ENCODE measurements at regions of chr19 and their contacts with region 1.

Region 1: DNA sequence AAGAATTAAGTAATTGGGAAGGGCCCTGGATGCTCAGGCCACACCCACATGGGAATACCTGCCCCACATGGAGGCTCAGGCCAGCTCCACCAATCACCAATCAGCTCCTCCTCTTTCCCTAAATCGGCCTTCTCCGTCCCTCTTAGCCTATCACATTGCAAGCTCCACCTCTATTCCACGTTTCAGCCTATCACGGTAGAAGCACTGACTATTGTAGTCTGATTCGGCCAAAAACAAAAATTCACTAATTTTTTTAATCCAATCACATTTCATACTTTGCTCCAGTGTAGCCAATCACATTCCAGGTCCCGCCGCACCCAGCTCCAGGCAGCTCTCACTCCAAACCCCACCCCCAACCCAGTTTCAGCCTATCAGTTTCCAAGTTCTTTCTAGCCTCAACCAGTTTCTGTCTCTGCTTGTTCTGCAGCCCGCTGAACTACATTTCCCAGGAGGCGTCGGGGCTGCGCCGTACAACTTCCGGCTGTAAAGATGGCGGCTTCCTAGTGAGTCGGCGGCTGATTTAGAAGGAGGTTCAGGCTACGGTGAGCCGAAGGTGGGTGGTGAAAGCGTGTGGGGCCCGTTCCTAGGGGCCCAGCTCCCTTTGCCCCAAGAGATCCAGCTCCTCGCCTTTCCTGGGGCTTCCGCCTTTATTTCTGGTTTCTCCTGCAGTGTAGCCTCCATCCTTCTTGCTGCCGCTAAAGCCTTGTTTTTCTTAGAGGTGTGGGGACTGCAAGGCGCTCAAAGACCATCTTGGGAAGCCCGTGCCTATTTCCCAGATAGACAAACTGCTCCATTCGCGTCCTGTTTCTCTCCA is at the start of gene BABAM1:
- DNase-seq: peak; percentile 81
- ATAC-seq: peak; percentile 89
- H3K4me3 Mint-ChIP-seq: peak within 1 kb of the TSS; percentile 91
- H3K27ac Mint-ChIP-seq: peak within 1 kb of the TSS; percentile 93
- H3K4me1 Mint-ChIP-seq: peaks cover 29% of the 10 kb centered on the region
- H3K27me3 Mint-ChIP-seq: no peaks in the 10 kb centered on the region
- CTCF ChIP-seq: no peak
- total RNA-seq, gene BABAM1: 121 and 135 TPM in 2 replicates

Region 2: DNA sequence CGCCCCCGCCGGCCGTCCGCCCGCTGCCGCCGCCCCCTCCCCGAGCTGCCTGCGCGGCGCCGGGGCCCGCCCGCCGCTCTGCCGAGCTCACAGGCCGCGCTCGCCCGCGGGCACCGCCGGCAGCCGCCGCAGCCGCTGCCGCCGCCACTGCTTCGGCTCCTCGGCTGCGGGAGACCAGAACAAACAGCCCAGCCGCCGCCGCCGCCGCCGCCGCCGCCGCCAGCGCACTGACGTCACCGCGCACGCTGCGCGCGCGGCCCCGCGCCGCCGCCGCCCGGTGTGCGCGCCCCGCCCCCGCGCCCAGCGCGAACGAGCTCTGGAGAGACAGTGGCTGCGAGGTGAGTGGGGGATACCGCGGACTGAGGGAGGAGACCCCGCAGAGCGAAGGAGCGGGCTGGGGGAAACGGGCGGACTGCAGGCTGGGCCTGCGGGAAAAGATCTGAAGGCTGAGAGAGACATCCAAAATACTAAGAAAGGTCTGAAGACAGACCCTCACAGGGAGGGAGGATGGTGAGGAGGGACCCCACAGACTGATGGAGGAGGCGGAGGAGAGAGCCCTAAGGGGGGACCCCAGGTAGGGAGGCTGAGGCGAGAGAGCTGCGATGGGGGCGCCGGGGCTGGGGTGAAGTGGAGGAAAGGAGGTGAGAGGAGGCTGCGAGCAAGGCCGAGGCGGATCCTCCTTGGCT is 1934.7 kb before region 1 on chr19 and contains the start of gene BRD4:
- CTCF ChIA-PET with region 1: no interaction called
- POLR2A ChIA-PET with region 1: no interaction called
- intact Hi-C with region 1: loop called (anchors 5 kb)
- DNase-seq: peak; percentile 86
- ATAC-seq: peak; percentile 35
- H3K4me3 Mint-ChIP-seq: peak within 1 kb of the TSS; percentile 95
- H3K27ac Mint-ChIP-seq: peak within 1 kb of the TSS; percentile 95
- H3K4me1 Mint-ChIP-seq: peaks cover 60% of the 10 kb centered on the region
- H3K27me3 Mint-ChIP-seq: no peaks in the 10 kb centered on the region
- CTCF ChIP-seq: no peak
- total RNA-seq, gene BRD4: 144 and 164 TPM in 2 replicates

Region 3: DNA sequence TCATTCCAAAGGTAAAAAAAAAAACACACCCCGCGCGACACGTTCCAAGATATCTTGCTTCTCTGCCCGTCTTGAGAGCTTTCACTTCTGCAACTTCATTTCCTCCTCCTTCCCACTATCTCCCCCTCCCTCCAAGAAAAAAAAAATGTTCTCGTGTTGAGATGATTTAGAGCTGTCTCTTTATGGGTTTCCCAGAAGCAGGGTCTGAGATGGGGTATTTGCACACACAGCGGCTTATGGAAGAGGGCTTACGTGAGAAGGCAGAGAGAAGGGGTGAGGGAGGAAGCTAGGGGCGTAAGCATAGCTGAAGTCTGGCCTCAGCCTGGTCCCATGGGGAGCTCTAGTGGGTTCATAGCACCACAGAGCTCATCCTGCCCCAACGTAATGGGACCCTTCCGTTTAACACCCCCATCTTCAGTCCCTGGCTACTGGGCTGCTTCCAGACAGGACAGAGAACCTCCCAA is 83.3 kb before region 1 on chr19:
- CTCF ChIA-PET with region 1: no interaction called
- POLR2A ChIA-PET with region 1: interaction called, 13 read pairs
- intact Hi-C with region 1: no loop called
- DNase-seq: peak; percentile 42
- ATAC-seq: peak; percentile 85
- H3K4me3 Mint-ChIP-seq: peak overlapping the region; percentile 79
- H3K27ac Mint-ChIP-seq: peak overlapping the region; percentile 99
- H3K4me1 Mint-ChIP-seq: peaks cover 32% of the 10 kb centered on the region
- H3K27me3 Mint-ChIP-seq: no peaks in the 10 kb centered on the region
- CTCF ChIP-seq: no peak

Region 4: DNA sequence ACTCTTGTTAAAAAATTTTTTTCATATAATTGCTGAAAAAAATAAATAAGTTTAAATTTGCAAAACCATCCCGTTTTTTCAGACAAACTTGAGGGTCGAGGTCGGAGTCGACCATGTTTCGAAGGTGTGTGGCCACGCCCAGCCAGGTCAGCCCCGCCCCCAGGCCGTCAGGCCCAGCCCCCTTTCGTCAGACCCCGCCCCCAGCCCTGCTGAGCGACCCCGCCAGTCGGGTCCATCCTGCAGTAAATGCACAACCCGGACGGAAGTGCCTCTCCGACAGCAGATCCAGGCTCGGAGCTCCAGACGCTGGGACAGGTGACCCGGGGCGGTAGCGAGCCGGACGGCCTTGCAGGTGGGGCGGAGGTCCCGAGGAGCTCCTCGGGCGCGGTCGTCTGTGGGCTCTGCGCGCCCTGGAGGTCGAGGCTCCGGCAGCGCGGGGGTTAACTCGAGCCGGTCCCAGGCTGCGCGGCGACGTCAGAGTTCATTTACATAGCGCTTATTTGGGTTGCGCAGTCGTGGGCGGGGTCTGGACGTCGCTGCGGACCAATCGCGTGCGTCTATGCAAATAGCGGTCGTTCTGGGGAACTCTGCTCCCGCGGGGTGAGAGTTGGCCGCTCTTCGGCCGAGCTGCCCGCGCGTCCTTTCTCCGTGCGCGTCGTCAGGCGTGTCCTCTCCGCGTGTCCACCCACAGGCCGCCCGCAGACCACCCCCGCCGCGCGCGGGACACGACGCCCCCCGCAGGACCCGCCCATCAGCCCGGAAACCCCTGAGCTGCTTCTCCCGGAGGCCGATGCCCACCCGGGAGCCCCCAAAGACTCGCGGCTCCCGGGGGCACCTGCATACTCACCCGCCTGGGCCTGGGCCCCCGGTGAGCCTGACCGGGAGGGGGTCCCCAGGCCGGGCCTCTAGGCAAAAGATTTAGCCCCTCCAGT is 40.9 kb before region 1 on chr19 and contains the start of gene OCEL1:
- CTCF ChIA-PET with region 1: interaction called, 4 read pairs
- POLR2A ChIA-PET with region 1: interaction called, 15 read pairs
- intact Hi-C with region 1: loop called (anchors 1 kb)
- DNase-seq: peak; percentile 95
- ATAC-seq: peak; percentile 90
- H3K4me3 Mint-ChIP-seq: peak within 1 kb of the TSS; percentile 95
- H3K27ac Mint-ChIP-seq: peak within 1 kb of the TSS; percentile 97
- H3K4me1 Mint-ChIP-seq: peaks cover 6% of the 10 kb centered on the region
- H3K27me3 Mint-ChIP-seq: no peaks in the 10 kb centered on the region
- CTCF ChIP-seq: no peak
- total RNA-seq, gene OCEL1: 22.4 and 25.8 TPM in 2 replicates

Region 5: DNA sequence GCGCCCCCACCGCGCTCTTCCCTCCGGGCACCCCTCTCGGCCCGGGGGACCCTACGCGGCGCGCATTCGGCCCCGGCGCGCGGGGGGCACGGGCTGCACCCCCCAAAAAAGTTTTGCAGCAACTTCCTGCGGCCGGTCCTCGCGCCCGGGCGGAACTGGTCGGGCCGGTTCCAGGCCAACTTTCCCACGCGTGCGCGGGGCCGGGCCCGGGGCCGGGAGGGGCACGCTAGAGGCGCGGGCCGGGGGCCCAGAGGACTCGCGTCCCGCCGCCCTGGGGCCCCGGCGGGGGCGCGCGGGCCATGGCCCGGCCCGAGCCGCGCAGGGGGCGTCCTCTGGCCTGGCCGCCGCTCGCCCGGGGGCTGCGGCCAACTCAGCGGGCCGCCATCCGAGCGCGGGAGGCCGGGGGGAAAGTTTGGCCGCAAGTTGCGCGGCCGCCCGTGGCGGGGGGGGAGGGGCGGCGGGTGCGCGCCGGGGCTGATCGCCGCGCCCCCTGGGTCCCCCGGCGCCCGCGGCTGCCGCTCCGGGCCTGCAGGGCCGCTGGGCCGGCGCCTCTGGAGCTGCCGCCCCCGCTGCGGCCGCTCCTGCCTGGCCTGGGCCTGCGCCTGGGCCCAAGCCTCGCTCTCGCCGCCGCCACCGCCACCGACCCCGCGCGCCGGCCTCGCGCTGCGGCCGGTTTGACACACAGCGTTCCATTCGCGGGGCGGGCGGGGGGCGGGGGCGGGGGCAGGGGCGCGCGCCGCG is 21.8 kb before region 1 on chr19 and contains the start of gene NR2F6:
- CTCF ChIA-PET with region 1: no interaction called
- POLR2A ChIA-PET with region 1: interaction called, 5 read pairs
- intact Hi-C with region 1: loop called (anchors 2 kb)
- DNase-seq: no peak
- ATAC-seq: peak; percentile 39
- H3K4me3 Mint-ChIP-seq: peak within 1 kb of the TSS; percentile 92
- H3K27ac Mint-ChIP-seq: peak within 1 kb of the TSS; percentile 89
- H3K4me1 Mint-ChIP-seq: peaks cover 13% of the 10 kb centered on the region
- H3K27me3 Mint-ChIP-seq: no peaks in the 10 kb centered on the region
- CTCF ChIP-seq: no peak
- total RNA-seq, gene NR2F6: 4.3 and 4.6 TPM in 2 replicates

Region 6: GRCh38 chr19:17336872-17337722 is 69.9 kb after region 1 on chr19 and contains the start of gene GTPBP3:
- CTCF ChIA-PET with region 1: no interaction called
- POLR2A ChIA-PET with region 1: interaction called, 3 read pairs
- intact Hi-C with region 1: loop called (anchors 1 kb)
- DNase-seq: peak; percentile 87
- ATAC-seq: peak; percentile 88
- H3K4me3 Mint-ChIP-seq: peak within 1 kb of the TSS; percentile 90
- H3K27ac Mint-ChIP-seq: peak within 1 kb of the TSS; percentile 89
- H3K4me1 Mint-ChIP-seq: peaks cover 36% of the 10 kb centered on the region
- H3K27me3 Mint-ChIP-seq: no peaks in the 10 kb centered on the region
- CTCF ChIP-seq: no peak
- total RNA-seq, gene GTPBP3: 32.4 and 40.2 TPM in 2 replicates

Region 7: DNA sequence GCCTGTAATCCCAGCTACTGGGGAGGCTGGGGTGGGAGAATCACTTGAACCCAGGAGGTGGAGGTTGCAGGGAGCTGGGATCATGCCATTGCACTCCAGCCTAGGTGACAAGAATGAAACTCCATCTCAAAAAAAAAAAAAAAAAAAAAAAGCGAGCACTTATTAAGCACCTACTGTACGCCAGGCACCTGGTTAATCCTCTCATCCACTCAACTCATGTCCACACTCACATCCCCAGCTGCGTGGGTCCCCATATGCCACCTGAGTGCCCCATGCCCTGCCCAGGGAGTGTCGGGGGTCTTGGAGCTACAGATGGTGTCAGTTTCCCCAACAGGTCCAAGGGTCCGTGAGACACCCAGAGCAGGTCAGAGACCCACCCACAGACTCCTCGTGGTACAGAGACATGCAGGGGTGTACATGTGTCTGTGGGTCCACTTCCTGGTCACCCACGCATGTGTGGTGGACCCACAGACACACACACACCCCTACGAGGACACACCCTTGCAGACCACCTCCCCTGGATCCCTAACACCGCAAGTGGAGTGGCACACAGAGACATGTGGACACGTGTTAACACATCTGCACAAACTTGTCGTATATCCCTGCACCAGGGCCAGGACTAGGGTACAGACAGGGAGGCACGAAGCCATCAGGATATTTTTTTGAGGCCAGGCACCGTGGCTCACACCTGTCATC is 550.6 kb after region 1 on chr19:
- CTCF ChIA-PET with region 1: no interaction called
- POLR2A ChIA-PET with region 1: no interaction called
- intact Hi-C with region 1: no loop called
- DNase-seq: no peak
- ATAC-seq: no peak
- H3K4me3 Mint-ChIP-seq: no peak overlapping the region
- H3K27ac Mint-ChIP-seq: no peak overlapping the region
- H3K4me1 Mint-ChIP-seq: no peaks in the 10 kb centered on the region
- H3K27me3 Mint-ChIP-seq: no peaks in the 10 kb centered on the region
- CTCF ChIP-seq: no peak

Measured in activated B cell treated with CpG ODN at 0.5 μM for 24 hours (primary cell).